Posterior cingulate gyrus (tissue), 11 donors: ENCODE measurements at regions of chr3 and their contacts with region 1.

Region 1: DNA sequence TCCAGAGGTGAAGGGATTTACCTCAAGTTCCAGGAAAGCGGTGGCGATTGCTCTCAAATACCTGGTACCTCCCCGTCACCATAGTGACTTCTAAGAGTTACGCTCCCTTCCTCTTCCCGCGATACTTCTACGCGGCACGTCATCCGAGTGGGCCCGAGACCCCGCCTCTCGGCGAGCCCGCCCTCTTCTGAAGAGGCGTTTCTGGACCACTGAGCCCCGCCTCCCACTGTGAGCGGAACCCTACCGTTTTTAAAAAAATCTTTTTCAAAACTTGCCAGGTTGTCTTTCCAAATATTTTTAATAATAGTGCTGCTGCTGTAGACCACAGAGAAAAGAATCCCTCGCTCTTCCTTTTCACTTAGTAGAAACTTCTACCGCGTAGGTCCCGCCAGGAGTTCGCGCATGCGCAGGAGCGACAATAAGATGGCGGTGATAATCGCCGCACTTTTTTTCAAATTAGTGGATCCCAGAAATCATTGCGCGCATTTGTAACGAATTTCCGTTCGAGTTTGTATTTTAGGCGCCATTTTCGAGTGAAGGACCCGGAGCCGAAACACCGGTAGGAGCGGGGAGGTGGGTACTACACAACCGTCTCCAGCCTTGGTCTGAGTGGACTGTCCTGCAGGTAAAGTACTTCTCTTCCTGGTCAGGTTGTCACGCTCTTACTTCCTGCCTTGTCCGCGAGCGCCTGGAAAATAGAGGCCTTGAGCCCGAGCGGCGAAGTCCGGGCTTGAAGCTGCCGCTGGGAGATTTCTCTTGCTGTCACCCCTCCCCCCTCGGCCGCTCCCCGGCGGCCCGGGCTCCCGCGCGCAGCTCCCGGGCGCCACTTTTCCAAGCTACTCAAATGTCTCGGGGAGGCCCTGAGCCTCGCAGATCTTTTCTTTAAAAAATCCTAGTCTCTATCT is at the starts of genes IFT80 and SMC4:
- DNase-seq: peak; percentile 91 to 99 (median 95)

Region 2: DNA sequence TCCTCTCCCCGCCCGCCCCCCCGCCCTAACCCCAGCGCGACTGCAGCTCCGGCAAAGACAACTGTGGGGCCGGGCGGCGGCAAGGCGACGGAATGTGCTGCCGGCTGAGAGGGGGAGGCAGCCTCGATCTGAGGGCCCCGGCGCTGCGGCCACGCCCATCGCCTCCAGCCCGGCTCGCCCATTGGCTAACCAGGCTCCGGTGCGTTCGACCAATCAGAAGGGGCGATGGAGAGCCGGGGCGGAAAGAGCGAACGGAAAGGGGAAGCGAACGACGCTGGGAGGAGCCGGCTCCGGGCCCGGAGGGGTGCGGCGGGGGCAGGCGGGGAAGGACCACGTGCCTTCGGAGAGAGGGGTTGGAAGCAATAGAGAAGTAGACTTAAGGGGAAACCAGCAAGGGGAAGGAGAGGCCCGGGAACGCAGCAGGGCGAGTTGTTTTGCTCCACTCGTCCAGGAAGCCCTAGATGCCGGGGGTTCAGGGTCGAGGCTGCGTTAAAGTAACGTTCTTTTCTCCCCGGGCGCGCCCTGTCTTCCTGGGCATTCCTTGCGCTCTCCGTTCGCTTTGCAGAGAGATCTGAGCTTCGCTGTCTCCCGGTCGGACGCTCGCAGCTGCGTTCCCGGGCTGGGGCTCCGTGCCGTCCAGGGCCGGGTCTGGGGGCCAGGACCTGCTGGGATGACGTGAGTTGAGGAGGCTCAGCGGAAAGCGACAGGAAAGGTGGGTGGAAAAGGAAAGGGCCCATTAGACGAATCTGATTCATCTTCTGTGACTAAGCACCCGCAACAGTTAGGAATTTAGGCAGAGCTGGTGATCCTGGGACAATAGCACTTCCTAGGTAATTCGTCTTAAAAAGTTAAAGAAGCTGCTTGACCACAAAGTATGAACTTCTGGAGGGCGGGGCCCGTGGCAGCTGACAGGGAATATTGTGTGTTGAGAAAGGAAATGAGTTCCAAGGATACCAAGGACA is 166.3 kb after region 1 on chr3 and contains the start of gene KPNA4:
- intact Hi-C with region 1: loop called (anchors 2 kb)
- DNase-seq: peak; percentile 95 to 99 (median 96)